ENCODE measurements at regions of chr5 and their contacts with region 1.

Region 1: DNA sequence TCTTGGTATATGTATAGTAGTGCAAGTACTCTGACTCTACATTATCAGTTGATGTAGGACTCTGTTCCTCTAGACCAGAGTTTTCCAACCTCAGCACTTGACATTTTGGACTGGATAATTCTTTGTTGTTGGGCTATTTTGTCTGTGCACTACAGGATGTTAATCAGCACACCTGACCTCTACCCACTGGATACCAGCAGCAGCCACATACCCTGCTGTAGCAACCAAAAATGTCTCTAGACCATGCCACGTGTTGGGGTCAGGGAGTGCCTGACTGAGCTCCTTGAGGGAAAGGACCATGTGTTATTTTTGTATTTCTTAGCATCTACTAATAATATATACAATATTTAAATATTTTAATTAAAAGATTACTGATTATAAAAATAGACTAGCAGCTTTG is 42.7 kb downstream of the TNPO1 start:
- DNase-seq: no peak
- ATAC-seq: no peak
- H3K4me3 ChIP-seq: no peak overlapping the region
- H3K4me3 Mint-ChIP-seq: no peak overlapping the region
- H3K27ac ChIP-seq: no peak overlapping the region
- H3K27ac Mint-ChIP-seq: no peak overlapping the region
- H3K4me1 ChIP-seq: peaks cover 15% of the 10 kb centered on the region
- H3K4me1 Mint-ChIP-seq: peaks cover 51% of the 10 kb centered on the region
- H3K27me3 ChIP-seq: no peaks in the 10 kb centered on the region
- H3K27me3 Mint-ChIP-seq: no peaks in the 10 kb centered on the region
- CTCF ChIP-seq: no peak

Region 2: GRCh38 chr5:72883864-72884263 is 24.7 kb after region 1 on chr5:
- CTCF ChIA-PET with region 1: no interaction called
- POLR2A ChIA-PET with region 1: no interaction called
- intact Hi-C with region 1: no loop called
- DNase-seq: no peak
- ATAC-seq: no peak
- H3K4me3 ChIP-seq: no peak overlapping the region
- H3K4me3 Mint-ChIP-seq: no peak overlapping the region
- H3K27ac ChIP-seq: no peak overlapping the region
- H3K27ac Mint-ChIP-seq: no peak overlapping the region
- H3K4me1 ChIP-seq: no peaks in the 10 kb centered on the region
- H3K4me1 Mint-ChIP-seq: peaks cover 3% of the 10 kb centered on the region
- H3K27me3 ChIP-seq: no peaks in the 10 kb centered on the region
- H3K27me3 Mint-ChIP-seq: no peaks in the 10 kb centered on the region
- CTCF ChIP-seq: no peak

Region 3: DNA sequence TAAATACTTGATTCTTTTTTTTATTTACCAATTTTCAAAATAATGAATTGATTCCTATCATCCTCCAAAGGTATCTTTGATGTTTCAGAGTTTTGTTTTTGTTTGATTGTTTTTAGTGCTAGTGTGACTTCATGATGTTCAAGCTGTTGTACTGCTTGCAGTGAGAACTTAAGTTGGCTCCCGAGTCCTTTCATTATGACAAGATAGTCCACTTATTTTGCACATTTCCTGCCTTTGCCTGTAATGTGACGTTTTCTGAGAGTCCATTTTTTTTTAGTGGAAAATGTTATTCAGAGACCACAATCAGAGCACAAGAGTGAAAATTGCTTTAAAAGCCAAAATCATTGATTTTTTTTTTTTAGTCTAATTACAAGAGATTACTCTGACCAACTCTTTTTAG is 36.6 kb after region 1 on chr5:
- CTCF ChIA-PET with region 1: no interaction called
- POLR2A ChIA-PET with region 1: no interaction called
- intact Hi-C with region 1: loop called (anchors 5 kb)
- DNase-seq: no peak
- ATAC-seq: no peak
- H3K4me3 ChIP-seq: no peak overlapping the region
- H3K4me3 Mint-ChIP-seq: no peak overlapping the region
- H3K27ac ChIP-seq: no peak overlapping the region
- H3K27ac Mint-ChIP-seq: no peak overlapping the region
- H3K4me1 ChIP-seq: no peaks in the 10 kb centered on the region
- H3K4me1 Mint-ChIP-seq: peaks cover 2% of the 10 kb centered on the region
- H3K27me3 ChIP-seq: no peaks in the 10 kb centered on the region
- H3K27me3 Mint-ChIP-seq: no peaks in the 10 kb centered on the region
- CTCF ChIP-seq: no peak

Measured in CD8-positive, alpha-beta T cell (primary cell).